Calu3 (cell line): ENCODE measurements at regions of chr14 and their contacts with region 1.

Region 1: GRCh38 chr14:23694085-23694975 is 58.2 kb downstream of the DHRS2 start:
- DNase-seq: peak; percentile 54
- H3K4me3 Mint-ChIP-seq: no peak overlapping the region
- H3K27ac Mint-ChIP-seq: no peak overlapping the region
- H3K4me1 Mint-ChIP-seq: no peaks in the 10 kb centered on the region
- H3K27me3 Mint-ChIP-seq: peaks cover 4% of the 10 kb centered on the region
- CTCF ChIP-seq: no peak

Region 2: DNA sequence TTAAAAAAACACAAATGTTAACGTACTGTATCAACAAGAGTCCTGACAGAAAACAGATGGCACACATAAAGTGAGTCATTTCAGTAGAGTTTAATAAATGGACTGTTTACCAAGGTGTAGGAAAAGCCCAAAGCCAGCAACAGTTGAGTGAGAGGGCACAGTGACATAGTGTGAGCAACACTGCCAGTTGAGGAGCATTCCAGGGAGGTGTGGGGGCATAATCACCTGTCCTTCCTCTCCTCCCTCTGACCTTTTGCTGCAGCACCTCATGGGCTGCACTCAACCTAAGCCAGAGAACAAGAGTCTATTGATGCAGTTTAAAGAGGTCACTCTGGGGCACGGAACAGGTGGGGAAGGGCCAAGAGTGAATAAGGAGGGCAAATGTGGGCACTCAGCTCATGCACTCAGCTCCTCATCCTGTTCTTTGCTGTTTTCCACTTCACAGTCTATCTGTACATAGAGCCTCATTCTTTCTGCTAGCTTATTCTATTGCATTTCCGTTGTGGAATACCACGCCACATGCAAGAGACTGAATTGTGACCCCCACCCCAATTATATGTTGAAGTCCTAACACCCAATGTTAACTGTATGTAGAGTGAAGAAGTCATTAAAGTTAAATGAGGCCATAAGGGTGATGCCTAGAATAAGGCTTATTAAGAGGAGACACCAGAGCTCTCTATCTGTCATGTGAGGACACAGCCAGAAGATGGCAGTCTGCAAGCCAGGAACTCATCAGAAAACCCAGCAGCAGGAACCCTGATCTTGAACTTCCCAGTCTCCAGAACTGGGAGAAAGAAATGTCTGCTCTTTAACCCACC is 28.7 kb before region 1 on chr14:
- CTCF ChIA-PET with region 1: interaction called, 11 read pairs
- intact Hi-C with region 1: no loop called
- DNase-seq: peak; percentile 48
- H3K4me3 Mint-ChIP-seq: no peak overlapping the region
- H3K27ac Mint-ChIP-seq: no peak overlapping the region
- H3K4me1 Mint-ChIP-seq: no peaks in the 10 kb centered on the region
- H3K27me3 Mint-ChIP-seq: peaks cover 74% of the 10 kb centered on the region
- CTCF ChIP-seq: no peak

Region 3: DNA sequence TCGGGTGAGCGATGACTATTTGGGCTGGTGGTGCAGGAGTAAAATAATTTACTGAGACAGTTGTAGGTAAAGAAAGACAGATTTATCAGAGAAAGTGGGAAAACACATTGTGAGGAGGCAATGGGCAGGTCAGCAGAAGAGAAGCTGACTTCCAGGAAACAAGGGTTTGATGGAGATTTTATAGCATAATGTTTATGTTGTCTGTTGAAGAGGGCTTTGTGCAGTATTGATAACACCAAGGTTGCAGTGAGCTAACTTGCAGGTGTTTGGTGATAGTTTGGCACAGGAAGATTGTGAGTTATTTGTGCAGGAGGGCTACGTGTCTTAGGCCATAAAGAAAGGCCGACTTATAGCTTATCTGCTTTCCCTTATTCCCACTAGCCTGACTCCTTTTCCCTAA is 14.0 kb after region 1 on chr14:
- CTCF ChIA-PET with region 1: no interaction called
- intact Hi-C with region 1: loop called (anchors 2 kb)
- DNase-seq: no peak
- H3K4me3 Mint-ChIP-seq: no peak overlapping the region
- H3K27ac Mint-ChIP-seq: no peak overlapping the region
- H3K4me1 Mint-ChIP-seq: no peaks in the 10 kb centered on the region
- H3K27me3 Mint-ChIP-seq: peaks cover 26% of the 10 kb centered on the region
- CTCF ChIP-seq: no peak